Common myeloid progenitor, CD34-positive (primary cell): ENCODE measurements at regions of chr3 and their contacts with region 1.

Region 1: DNA sequence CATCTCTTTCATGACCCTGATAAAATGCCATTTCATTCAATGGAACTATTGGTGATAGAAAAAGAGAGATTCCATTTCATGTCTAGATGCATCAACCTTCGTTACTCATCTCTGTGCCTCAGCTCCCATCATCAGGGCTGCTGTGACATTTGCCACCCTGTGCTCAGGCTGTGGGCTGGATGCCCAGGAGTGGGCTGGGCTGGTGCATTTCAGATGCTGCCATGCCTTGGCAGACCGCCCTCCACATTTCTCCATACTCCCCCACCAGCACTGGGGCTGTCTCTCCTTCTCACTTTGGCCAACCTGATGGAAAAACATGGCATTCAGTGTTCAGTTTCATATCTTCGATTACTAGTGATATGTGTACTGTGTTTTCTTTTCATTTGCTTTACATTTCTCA is 59.1 kb downstream of the DNASE1L3 start:
- DNase-seq: no peak
- H3K4me3 ChIP-seq: no peak overlapping the region
- H3K27ac ChIP-seq: no peak overlapping the region
- H3K4me1 ChIP-seq: no peaks in the 10 kb centered on the region
- H3K27me3 ChIP-seq: no peaks in the 10 kb centered on the region

Region 2: GRCh38 chr3:58073301-58074108 is 78.1 kb before region 1 on chr3:
- CTCF ChIA-PET with region 1: no interaction called
- POLR2A ChIA-PET with region 1: interaction called, 10 read pairs
- DNase-seq: peak in 1 of 3 donors; percentile 62
- H3K4me3 ChIP-seq: no peak overlapping the region
- H3K27ac ChIP-seq: peak overlapping the region; percentile 7 to 62
- H3K4me1 ChIP-seq: peaks cover 12 to 39% (median 26%) of the 10 kb centered on the region in 4 experiments
- H3K27me3 ChIP-seq: no peaks in the 10 kb centered on the region

Region 3: DNA sequence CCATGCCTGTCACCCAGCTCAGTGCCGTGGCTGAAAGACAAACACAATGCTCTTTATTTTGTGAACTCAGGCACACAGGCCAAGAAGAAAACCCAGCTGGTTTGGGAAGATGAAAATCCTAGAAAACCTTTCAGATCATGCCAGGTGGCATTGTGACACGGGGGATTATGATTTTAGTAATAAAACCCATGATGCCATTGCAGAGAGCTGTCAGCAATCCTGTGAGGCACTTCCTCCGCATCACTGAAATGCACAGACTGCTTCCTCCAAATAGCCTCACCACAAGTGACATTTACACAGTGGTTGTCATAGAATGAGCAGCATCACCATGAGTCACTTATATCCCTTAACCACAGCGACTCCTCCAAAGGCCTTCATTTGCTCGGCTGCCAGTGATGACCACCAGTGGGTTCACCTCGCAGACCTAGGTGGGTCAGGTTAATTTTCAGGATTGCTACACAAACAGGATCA is 108.7 kb after region 1 on chr3:
- CTCF ChIA-PET with region 1: no interaction called
- POLR2A ChIA-PET with region 1: no interaction called
- DNase-seq: peak; percentile 15 to 75 (median 58)
- H3K4me3 ChIP-seq: no peak overlapping the region
- H3K27ac ChIP-seq: no peak overlapping the region
- H3K4me1 ChIP-seq: no peaks in the 10 kb centered on the region
- H3K27me3 ChIP-seq: no peaks in the 10 kb centered on the region

Region 4: DNA sequence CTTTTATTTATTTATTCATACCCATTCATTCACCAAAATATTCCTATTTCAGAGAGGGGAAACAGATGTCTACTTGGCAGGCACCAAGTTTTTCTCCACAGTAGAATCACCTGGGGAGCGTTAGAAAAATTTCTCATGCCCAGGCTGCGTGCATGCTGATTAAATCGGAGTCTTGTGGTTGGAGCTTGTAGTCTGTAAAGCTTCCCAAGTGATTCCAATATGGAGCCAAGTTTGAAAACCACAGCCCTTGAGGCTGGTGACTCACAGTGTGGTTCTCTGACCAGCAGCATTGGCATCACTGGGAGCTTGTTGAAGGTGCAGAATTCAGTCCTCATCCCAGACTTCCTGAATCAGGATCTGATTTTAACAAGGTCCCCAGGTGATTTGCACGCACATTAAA is 232.3 kb after region 1 on chr3:
- CTCF ChIA-PET with region 1: no interaction called
- POLR2A ChIA-PET with region 1: no interaction called
- DNase-seq: no peak
- H3K4me3 ChIP-seq: no peak overlapping the region
- H3K27ac ChIP-seq: no peak overlapping the region
- H3K4me1 ChIP-seq: peaks cover 2 to 43% (median 17%) of the 10 kb centered on the region in 4 experiments
- H3K27me3 ChIP-seq: no peaks in the 10 kb centered on the region

Region 5: GRCh38 chr3:59364496-59364895 is 1212.9 kb after region 1 on chr3:
- CTCF ChIA-PET with region 1: no interaction called
- POLR2A ChIA-PET with region 1: no interaction called
- DNase-seq: no peak
- H3K4me3 ChIP-seq: no peak overlapping the region
- H3K27ac ChIP-seq: no peak overlapping the region
- H3K4me1 ChIP-seq: peaks cover 0 to 9% (median 5%) of the 10 kb centered on the region in 4 experiments
- H3K27me3 ChIP-seq: no peaks in the 10 kb centered on the region